ENCODE measurements at regions of chr6 and their contacts with region 1.

Region 1: DNA sequence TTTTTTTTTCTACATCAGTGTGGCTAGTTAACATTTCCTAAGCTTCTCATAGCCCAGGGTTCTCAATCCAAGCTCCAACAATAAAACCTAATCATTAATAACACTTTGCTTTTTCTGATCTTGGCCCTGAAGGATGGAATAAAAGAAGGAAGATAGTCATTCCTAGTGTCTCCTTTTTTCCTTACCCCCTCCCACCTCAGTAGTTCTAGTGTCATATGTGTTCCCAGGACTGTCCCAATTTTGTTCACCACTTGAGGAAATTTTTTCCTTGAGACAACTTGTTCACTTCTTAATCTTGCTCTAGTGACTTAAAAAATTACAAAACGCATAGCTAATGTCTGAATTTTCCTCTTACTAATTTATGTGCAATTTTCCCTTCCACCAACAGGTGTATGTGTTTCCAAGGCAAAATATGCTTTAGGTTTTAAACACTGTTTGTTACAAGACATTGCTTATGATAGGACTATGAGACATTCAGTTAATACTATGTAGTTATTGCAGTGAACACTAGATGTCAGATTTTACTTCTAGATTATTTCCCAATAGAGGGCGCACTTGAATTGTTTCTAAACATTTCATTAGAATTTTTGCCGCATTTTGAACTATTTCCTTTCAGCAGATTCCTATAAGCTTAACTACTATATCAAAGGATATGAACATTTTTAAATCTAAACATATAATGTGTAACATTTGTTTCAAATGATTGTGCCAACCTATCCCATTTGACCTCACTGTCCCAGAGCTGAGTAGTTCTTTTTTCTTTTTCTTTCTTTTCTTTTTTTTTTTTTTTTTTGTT is 18.5 kb upstream of the C6orf141 start:
- DNase-seq: no peak
- H3K4me3 ChIP-seq: no peak overlapping the region
- H3K27ac ChIP-seq: no peak overlapping the region
- H3K4me1 ChIP-seq: no peaks in the 10 kb centered on the region
- H3K27me3 ChIP-seq: no peaks in the 10 kb centered on the region
- CTCF ChIP-seq: peak in 1 of 3 donors; percentile 18
- EP300 ChIP-seq: no peak
- POLR2A ChIP-seq: no peak

Region 2: GRCh38 chr6:49342410-49342809 is 189.6 kb before region 1 on chr6:
- intact Hi-C with region 1: no loop called
- DNase-seq: no peak
- H3K4me3 ChIP-seq: no peak overlapping the region
- H3K27ac ChIP-seq: no peak overlapping the region
- H3K4me1 ChIP-seq: no peaks in the 10 kb centered on the region
- H3K27me3 ChIP-seq: no peaks in the 10 kb centered on the region
- CTCF ChIP-seq: no peak
- EP300 ChIP-seq: no peak
- POLR2A ChIP-seq: no peak

Region 3: GRCh38 chr6:49370518-49370917 is 161.5 kb before region 1 on chr6:
- intact Hi-C with region 1: no loop called
- DNase-seq: no peak
- H3K4me3 ChIP-seq: no peak overlapping the region
- H3K27ac ChIP-seq: no peak overlapping the region
- H3K4me1 ChIP-seq: no peaks in the 10 kb centered on the region
- H3K27me3 ChIP-seq: no peaks in the 10 kb centered on the region
- CTCF ChIP-seq: no peak
- EP300 ChIP-seq: no peak
- POLR2A ChIP-seq: no peak

Region 4: DNA sequence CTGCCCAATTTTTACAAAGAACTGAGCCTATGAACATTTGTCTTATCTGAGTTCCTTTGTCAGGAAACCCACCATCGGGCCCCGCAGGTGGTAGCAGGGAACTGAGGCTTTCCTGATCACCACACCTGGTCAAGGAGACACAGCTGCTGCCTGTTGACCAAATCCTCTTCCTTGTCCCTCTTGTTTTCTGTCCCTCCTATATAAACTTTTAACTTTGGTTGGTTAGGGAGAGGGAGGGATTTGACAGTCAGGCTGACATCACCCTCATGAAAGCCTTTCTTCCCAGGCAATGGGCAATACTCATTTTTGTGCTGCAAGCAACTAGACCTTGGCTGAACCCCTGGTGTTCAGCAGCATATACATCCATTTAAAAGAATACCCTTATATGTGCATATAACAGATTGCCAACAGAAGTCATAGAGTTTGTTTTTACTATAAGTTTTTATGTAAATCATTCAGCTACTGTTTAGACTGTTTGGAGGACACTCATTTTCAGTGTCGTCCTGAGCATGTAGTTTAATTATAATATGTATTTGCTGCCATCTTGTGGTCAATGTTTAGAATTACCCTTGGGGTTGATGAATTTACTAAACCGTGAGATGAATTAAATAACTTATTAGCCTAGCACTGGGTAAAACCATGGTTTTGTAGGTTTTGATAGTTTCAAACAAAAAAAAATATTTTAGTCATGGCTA is 317.4 kb after region 1 on chr6:
- intact Hi-C with region 1: loop called in 1 of 4 experiments (anchors 10 kb)
- DNase-seq: no peak
- H3K4me3 ChIP-seq: no peak overlapping the region
- H3K27ac ChIP-seq: no peak overlapping the region
- H3K4me1 ChIP-seq: no peaks in the 10 kb centered on the region
- H3K27me3 ChIP-seq: no peaks in the 10 kb centered on the region
- CTCF ChIP-seq: peak in 2 of 3 donors; percentile 24 to 56
- EP300 ChIP-seq: no peak
- POLR2A ChIP-seq: no peak

Measured in ovary (tissue), 10 donors.